ENCODE measurements at regions of chr2 and their contacts with region 1.

Region 1: DNA sequence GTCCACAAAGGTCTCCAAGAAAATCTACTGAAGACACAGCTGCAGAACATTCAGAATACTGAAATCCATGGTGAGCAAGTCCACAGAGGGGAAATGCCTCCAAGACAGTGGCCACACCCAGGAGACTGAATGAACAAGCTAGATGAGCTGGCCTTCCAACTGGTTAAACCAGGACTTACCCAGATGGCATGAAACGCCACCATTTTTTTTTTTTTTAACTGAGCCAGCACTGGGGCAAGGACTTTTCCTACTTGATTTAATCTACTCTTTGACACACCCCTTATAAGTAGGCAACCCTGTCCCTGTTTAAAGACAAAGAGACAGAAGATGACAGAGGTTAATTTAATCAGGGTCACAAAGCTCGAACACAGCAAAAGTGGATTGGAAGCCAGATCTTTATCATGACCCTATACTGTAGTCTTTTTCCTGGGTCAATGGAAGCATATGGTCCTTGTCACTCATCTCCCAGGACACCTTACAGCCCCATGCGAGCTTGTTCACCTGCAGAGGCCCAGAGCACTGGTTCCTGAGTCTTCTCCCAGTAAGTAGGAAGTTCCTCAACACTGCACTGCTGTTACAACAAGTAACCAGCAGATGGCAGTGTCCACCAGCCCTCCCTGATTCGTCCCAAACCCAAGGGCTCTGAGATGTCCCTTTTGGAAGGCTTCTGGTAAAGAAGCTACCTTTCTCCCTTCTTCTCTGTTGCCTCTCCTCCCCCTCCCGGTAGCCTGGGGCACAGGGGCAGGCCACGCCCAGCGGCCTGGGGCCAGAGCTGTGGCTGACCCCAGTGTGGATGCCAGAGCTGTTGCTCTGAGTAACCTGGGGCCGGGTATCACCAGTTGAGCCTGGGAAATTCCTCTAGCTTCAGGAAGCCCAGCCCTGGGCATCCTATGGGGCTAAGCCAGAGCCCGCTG is 5.6 kb upstream of the GDF7 start:
- DNase-seq: peak; percentile 78

Region 2: DNA sequence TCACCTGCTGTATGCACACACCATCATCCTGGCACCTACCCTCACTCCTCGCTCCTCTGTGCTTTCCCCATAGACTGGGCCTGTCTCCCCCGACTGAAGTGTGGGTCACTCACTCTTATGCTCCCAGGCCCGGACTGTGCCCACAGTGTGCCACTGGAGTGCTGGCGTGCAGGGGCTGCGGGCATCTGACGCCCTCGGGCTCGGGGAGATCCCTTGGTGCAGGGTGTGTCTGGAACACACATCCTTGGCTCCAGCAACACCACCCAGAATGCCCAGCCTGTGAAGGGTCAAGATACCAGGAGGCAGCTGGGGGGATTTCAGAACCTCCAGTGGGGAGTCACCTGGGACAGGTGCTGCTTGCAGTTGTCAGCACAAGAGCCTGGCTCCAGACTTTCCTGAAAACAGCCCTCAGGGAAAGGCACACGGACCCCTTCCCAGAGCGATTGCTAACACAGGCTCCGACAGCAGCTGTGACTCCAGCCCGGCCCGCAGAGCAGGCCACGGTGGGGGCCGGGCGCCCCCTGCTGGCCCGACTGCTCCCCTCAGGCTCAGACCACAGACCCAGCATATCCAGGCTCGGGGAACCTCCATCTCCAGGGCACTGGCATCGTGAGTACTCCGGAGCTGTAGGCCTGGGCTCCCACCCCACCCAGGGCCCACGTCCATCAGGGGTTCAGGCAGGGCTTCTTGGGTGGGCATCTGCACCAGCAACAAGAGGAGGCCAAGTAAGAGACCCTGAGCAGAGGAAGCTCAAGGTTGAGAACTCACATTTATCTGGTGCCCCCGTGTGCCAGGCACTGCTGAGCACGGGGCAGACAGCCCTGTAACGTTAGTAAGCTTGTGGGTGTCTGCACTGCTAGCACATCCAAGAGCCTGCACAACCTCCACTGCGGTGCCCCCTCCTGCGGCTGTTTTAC is 19.0 kb before region 1 on chr2:
- CTCF ChIA-PET with region 1: interaction called, 12 read pairs
- POLR2A ChIA-PET with region 1: no interaction called
- DNase-seq: peak; percentile 86

Region 3: GRCh38 chr2:20650880-20651730 is 10.2 kb before region 1 on chr2 and contains the start of gene HS1BP3:
- CTCF ChIA-PET with region 1: interaction called, 16 read pairs
- POLR2A ChIA-PET with region 1: no interaction called
- DNase-seq: peak; percentile 96

Region 4: GRCh38 chr2:20675701-20676352 is 14.5 kb after region 1 on chr2:
- CTCF ChIA-PET with region 1: interaction called, 17 read pairs
- POLR2A ChIA-PET with region 1: no interaction called
- DNase-seq: no peak

Region 5: DNA sequence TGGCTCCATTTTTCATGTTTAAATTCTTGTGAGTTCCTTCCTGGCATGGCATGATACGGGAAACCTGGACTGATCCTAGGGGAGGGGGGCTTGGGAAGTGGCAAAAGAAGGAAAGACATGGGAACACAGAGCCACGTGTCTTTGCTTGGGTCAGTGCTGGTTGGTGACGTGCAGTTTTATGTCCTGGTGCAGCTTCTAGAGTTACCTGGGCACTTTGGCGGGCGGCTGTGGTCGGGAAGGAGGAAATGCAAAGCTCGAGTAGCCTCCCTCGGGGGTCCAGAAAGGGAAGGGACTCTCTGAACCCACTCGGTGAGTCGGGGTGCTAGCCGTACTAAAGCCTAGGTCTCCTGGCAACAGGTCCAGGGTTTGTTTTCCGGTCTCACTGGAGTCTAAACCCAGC is 287.9 kb after region 1 on chr2:
- CTCF ChIA-PET with region 1: no interaction called
- POLR2A ChIA-PET with region 1: no interaction called
- DNase-seq: no peak

Region 6: GRCh38 chr2:20962939-20963557 is 301.7 kb after region 1 on chr2:
- CTCF ChIA-PET with region 1: interaction called, 32 read pairs
- POLR2A ChIA-PET with region 1: no interaction called
- DNase-seq: peak; percentile 64

Region 7: GRCh38 chr2:21025690-21026478 is 364.6 kb after region 1 on chr2:
- CTCF ChIA-PET with region 1: interaction called, 19 read pairs
- POLR2A ChIA-PET with region 1: no interaction called
- DNase-seq: no peak

Measured in HEK293T (cell line).